CD8-positive, alpha-beta memory T cell (primary cell): ENCODE measurements at regions of chr14 and their contacts with region 1.

Region 1: GRCh38 chr14:49867831-49868723 is 15.5 kb upstream of the NEMF start:
- DNase-seq: peak; percentile 93 to 99 (median 97)
- H3K4me3 ChIP-seq: peak overlapping the region; percentile 76
- H3K4me3 Mint-ChIP-seq: peak overlapping the region; percentile 77 to 93 (median 89)
- H3K27ac ChIP-seq: peak overlapping the region; percentile 75
- H3K27ac Mint-ChIP-seq: peak overlapping the region; percentile 92 to 99 (median 98)
- H3K4me1 ChIP-seq: peaks cover 40% of the 10 kb centered on the region
- H3K4me1 Mint-ChIP-seq: peaks cover 17 to 30% (median 17%) of the 10 kb centered on the region in 3 donors
- H3K27me3 ChIP-seq: no peaks in the 10 kb centered on the region
- H3K27me3 Mint-ChIP-seq: no peaks in the 10 kb centered on the region

Region 2: DNA sequence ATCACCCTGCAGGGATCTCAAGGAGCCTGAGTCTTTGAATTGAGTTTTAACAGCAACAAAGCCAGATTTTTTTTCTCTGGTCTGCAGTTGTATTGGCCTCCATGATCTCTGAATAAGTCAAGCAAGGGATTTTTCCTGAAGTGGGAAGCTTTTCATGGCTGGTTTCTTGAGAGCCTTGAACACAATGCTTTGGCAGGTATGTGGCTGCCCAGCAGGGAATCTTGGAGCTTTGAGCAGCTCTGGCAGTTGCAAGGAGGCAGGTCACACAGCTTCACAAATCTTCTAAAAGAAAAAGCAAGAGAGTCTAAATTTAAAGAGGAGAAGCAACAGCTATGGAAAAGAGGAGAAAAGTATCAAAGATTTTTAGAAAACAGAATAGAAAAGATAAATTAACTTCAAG is 342.0 kb before region 1 on chr14:
- CTCF ChIA-PET with region 1: no interaction called
- POLR2A ChIA-PET with region 1: no interaction called
- DNase-seq: no peak
- H3K4me3 ChIP-seq: no peak overlapping the region
- H3K4me3 Mint-ChIP-seq: no peak overlapping the region
- H3K27ac ChIP-seq: no peak overlapping the region
- H3K27ac Mint-ChIP-seq: no peak overlapping the region
- H3K4me1 ChIP-seq: no peaks in the 10 kb centered on the region
- H3K4me1 Mint-ChIP-seq: no peaks in the 10 kb centered on the region
- H3K27me3 ChIP-seq: no peaks in the 10 kb centered on the region
- H3K27me3 Mint-ChIP-seq: peaks cover 21 to 55% of the 10 kb centered on the region in 2 donors

Region 3: DNA sequence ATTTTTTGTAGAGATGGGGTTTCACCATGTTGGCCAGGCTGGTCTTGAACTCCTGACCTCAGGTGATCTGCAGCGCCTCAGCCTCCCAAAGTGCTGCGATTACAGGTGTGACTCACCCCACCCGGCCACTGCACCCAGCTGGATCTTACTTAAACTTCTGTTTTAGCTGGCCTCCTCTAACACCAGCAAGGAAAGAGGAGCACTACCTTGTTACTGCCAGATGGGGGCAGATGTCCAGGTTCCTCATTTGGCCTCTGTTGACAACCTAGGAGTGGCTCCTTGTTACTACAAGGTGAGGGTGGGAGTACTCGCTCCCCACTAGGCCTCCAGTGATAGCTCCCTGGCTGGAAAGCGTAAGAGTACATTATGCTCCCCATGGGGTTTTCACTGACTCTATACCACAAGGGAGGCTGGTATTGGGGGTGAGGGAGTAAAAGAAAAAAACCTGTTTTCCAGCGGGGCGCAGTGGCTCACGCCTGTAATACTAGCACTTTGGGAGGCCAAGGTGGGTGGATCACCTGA is 11.7 kb after region 1 on chr14:
- CTCF ChIA-PET with region 1: interaction called, 23 read pairs
- POLR2A ChIA-PET with region 1: no interaction called
- DNase-seq: peak in 4 of 5 donors; percentile 34 to 72 (median 56)
- H3K4me3 ChIP-seq: no peak overlapping the region
- H3K4me3 Mint-ChIP-seq: no peak overlapping the region
- H3K27ac ChIP-seq: no peak overlapping the region
- H3K27ac Mint-ChIP-seq: peak overlapping the region in 6 of 8 donors; percentile 36 to 96 (median 62)
- H3K4me1 ChIP-seq: peaks cover 11% of the 10 kb centered on the region
- H3K4me1 Mint-ChIP-seq: peaks cover 3 to 12% (median 10%) of the 10 kb centered on the region in 3 donors
- H3K27me3 ChIP-seq: no peaks in the 10 kb centered on the region
- H3K27me3 Mint-ChIP-seq: no peaks in the 10 kb centered on the region

Region 4: GRCh38 chr14:49957089-49957852 is 89.2 kb after region 1 on chr14:
- CTCF ChIA-PET with region 1: no interaction called
- POLR2A ChIA-PET with region 1: no interaction called
- DNase-seq: no peak
- H3K4me3 ChIP-seq: no peak overlapping the region
- H3K4me3 Mint-ChIP-seq: no peak overlapping the region
- H3K27ac ChIP-seq: no peak overlapping the region
- H3K27ac Mint-ChIP-seq: no peak overlapping the region
- H3K4me1 ChIP-seq: peaks cover 13% of the 10 kb centered on the region
- H3K4me1 Mint-ChIP-seq: peaks cover 1 to 12% (median 10%) of the 10 kb centered on the region in 3 donors
- H3K27me3 ChIP-seq: no peaks in the 10 kb centered on the region
- H3K27me3 Mint-ChIP-seq: no peaks in the 10 kb centered on the region

Region 5: GRCh38 chr14:49971156-49972130 is 103.4 kb after region 1 on chr14:
- CTCF ChIA-PET with region 1: interaction called, 22 read pairs
- POLR2A ChIA-PET with region 1: interaction called, 20 read pairs
- DNase-seq: peak in 3 of 5 donors; percentile 61 to 84 (median 66)
- H3K4me3 ChIP-seq: peak overlapping the region; percentile 41
- H3K4me3 Mint-ChIP-seq: peak overlapping the region; percentile 60 to 85 (median 79)
- H3K27ac ChIP-seq: peak overlapping the region; percentile 54
- H3K27ac Mint-ChIP-seq: peak overlapping the region; percentile 91 to 100 (median 94)
- H3K4me1 ChIP-seq: peaks cover 56% of the 10 kb centered on the region
- H3K4me1 Mint-ChIP-seq: peaks cover 41 to 68% (median 62%) of the 10 kb centered on the region in 3 donors
- H3K27me3 ChIP-seq: no peaks in the 10 kb centered on the region
- H3K27me3 Mint-ChIP-seq: peaks cover 0 to 2% of the 10 kb centered on the region in 2 donors

Region 6: DNA sequence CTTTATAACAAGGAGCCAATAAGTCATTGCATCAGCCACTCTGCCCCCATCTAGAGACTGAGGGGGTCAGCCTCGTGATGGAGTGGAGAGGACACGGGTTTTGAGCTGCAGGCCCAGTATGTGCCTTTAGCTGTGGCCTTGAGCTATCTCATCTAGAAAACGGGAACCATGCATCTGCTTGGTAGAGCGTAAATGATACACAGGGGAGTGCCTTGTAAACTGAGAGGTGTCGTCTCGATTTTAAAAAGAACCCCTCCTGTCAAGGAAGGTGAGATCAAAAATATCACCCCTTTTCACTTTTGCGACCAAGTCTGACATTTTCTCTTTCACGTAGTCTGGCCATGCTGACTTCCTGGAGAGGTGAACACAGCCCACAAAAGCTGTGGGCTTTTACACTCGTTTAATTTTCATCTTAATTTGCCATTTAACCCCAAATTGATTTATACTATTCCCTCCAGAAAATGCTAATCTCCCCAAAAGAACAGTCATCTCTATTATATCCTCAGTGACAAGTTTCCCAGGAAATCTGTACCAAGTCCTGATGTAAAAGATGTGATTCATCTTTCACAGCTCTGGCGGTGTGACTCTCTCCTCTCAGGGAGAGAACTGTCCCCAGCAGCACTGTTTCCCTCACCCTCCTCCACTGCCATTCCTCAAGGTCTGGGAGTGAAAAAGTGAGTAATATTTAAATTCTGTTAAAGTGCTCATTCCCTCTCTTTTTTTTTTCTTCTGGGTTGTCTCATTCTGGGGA is 217.7 kb after region 1 on chr14:
- CTCF ChIA-PET with region 1: interaction called, 89 read pairs
- POLR2A ChIA-PET with region 1: interaction called, 16 read pairs
- DNase-seq: peak; percentile 21 to 54 (median 44)
- H3K4me3 ChIP-seq: peak overlapping the region; percentile 7
- H3K4me3 Mint-ChIP-seq: peak overlapping the region; percentile 6 to 89 (median 71)
- H3K27ac ChIP-seq: peak overlapping the region; percentile 35
- H3K27ac Mint-ChIP-seq: peak overlapping the region; percentile 89 to 99 (median 97)
- H3K4me1 ChIP-seq: peaks cover 93% of the 10 kb centered on the region
- H3K4me1 Mint-ChIP-seq: peaks cover 75 to 93% (median 86%) of the 10 kb centered on the region in 3 donors
- H3K27me3 ChIP-seq: no peaks in the 10 kb centered on the region
- H3K27me3 Mint-ChIP-seq: no peaks in the 10 kb centered on the region

Region 7: GRCh38 chr14:50109342-50109741 is 241.3 kb after region 1 on chr14:
- CTCF ChIA-PET with region 1: interaction called, 47 read pairs
- POLR2A ChIA-PET with region 1: interaction called, 4 read pairs
- DNase-seq: no peak
- H3K4me3 ChIP-seq: no peak overlapping the region
- H3K4me3 Mint-ChIP-seq: no peak overlapping the region
- H3K27ac ChIP-seq: no peak overlapping the region
- H3K27ac Mint-ChIP-seq: peak overlapping the region in 2 of 8 donors; percentile 17 to 40
- H3K4me1 ChIP-seq: peaks cover 8% of the 10 kb centered on the region
- H3K4me1 Mint-ChIP-seq: peaks cover 8 to 33% (median 22%) of the 10 kb centered on the region in 3 donors
- H3K27me3 ChIP-seq: no peaks in the 10 kb centered on the region
- H3K27me3 Mint-ChIP-seq: no peaks in the 10 kb centered on the region